ENCODE measurements at regions of chr17 and their contacts with region 1.

Region 1: DNA sequence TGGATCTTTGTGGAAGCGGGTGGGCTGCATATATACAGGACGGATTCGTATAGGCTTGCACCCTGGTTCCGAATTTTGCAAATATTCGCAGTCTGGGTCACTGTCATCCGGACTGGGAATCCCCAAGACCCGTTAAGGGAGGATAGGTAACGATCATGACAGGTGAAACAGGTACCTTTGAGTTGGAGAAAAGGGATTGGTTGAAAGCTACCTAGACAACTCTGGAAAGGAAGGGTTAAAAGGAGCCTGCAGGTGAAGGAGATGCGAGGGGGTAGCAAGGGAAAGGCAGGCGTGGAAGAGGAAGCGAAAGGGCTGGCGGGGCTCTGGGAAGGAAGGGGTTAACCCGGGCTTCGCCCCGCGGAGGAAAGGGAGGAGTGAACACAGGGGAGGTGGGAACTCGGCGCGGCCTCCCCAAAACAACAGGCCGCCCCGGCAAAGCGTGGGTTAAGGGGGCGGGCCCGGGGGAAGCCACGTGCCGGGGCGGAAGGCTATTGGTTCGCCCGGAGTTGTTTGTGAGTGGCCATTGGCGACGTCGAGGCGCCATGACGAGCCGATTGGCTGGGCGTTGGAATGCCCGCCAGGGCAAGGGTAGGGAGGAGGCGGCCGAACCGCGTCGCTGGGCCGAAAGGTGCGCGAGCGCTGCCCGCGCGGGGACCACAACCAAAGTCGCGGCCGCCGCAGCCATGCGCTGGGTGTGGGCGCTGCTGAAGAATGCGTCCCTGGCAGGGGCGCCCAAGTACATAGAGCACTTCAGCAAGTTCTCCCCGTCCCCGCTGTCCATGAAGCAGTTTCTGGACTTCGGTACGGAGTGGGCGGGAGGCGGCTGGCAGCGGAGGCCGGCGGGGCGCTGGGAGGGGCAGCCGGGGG is at the start of gene PDK2:
- DNase-seq: peak; percentile 85 to 95
- H3K4me3 ChIP-seq: peak within 1 kb of the TSS; percentile 76 to 92 (median 82)
- H3K27ac ChIP-seq: no peak within 1 kb of the TSS; the same call in 1 of the 2 replicates
- H3K4me1 ChIP-seq: peaks cover 0 to 7% (median 5%) of the 10 kb centered on the region in 4 experiments; a peak in 4 of 7 replicates
- H3K27me3 ChIP-seq: peaks cover 0 to 3% (median 0%) of the 10 kb centered on the region in 4 experiments; a peak in 3 of 7 replicates
- CTCF ChIP-seq: no peak
- EP300 ChIP-seq: no peak
- POLR2A ChIP-seq: no peak
- RAD21 ChIP-seq: no peak
- total RNA-seq, gene PDK2: 17.8 and 18.3 TPM in 2 replicates

Region 2: DNA sequence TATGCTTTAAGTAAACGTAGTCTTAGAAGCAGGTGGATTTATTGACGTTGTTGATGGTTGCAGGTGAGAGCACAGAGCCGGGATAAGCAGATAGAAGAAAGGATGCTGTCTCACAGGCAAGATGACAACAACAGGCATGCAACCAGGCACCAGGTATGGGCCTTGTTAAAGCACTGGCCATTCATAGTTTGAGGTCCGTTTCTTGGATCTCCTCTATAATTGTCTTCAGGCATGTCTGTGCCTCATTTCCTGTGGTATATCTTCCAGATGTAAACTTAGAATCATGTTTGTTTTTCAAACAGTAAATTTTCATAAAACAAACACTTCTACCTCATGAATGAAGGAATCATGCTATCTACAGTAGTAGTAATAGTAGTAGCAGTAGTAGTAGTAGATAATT is 285.9 kb before region 1 on chr17:
- CTCF ChIA-PET with region 1: no interaction called
- POLR2A ChIA-PET with region 1: no interaction called
- DNase-seq: no peak
- H3K4me3 ChIP-seq: no peak overlapping the region
- H3K27ac ChIP-seq: peak overlapping the region; percentile 0; the same call in 1 of the 2 replicates
- H3K4me1 ChIP-seq: peaks cover 1 to 16% (median 7%) of the 10 kb centered on the region in 4 experiments; a peak in 6 of 7 replicates
- H3K27me3 ChIP-seq: no peaks in the 10 kb centered on the region
- CTCF ChIP-seq: no peak
- EP300 ChIP-seq: no peak
- POLR2A ChIP-seq: no peak
- RAD21 ChIP-seq: no peak

Region 3: DNA sequence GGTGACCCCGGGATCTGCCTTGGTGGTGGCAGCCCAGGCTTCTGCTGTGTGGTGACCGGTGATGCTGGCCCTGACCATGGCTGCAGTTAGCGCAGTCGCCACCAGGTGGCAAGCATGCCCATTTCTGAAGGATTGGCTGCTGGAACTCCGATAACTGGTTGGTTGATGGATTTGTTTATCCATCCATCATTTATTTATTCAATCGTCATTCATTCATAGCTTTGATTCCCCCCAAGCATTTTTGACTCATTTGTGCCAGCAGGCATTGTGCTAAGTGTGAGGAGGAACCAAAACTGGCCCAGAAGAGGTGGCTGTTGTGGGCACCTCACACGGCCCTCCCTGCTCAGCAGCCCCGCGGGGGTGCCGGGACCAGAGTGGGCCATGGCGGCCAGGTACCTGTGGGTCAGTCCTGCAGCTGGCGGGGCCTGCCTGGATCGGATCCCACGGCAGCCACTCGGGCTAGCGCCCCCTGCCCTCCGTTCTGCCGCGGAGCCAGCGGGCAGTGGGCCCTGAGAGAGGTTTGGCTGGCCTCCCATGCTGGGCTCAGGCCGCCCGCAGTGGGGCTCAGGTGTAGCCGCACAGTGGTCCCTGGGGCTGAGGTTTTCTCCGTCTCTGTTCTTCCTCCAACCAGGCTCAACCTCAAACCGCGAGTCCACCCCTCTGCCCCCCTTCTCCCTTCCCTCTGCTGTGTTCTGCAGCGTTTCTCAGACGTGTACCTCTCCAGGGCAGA is 67.9 kb before region 1 on chr17:
- CTCF ChIA-PET with region 1: interaction called, 68 read pairs
- POLR2A ChIA-PET with region 1: interaction called, 4 read pairs
- DNase-seq: peak; percentile 44 to 98
- H3K4me3 ChIP-seq: peak overlapping the region in 1 of 4 experiments; percentile 35; a peak in 1 of 8 replicates
- H3K27ac ChIP-seq: no peak overlapping the region
- H3K4me1 ChIP-seq: peaks cover 0 to 20% (median 14%) of the 10 kb centered on the region in 4 experiments; a peak in 6 of 7 replicates
- H3K27me3 ChIP-seq: 0 out of 7 replicates have a peak, but pooled peaks cover 0 to 5% (median 0%) of the 10 kb centered on the region in 4 experiments
- CTCF ChIP-seq: peak; percentile 94 to 98 (median 96)
- EP300 ChIP-seq: no peak
- POLR2A ChIP-seq: no peak
- RAD21 ChIP-seq: peak; percentile 82 to 85

Region 4: DNA sequence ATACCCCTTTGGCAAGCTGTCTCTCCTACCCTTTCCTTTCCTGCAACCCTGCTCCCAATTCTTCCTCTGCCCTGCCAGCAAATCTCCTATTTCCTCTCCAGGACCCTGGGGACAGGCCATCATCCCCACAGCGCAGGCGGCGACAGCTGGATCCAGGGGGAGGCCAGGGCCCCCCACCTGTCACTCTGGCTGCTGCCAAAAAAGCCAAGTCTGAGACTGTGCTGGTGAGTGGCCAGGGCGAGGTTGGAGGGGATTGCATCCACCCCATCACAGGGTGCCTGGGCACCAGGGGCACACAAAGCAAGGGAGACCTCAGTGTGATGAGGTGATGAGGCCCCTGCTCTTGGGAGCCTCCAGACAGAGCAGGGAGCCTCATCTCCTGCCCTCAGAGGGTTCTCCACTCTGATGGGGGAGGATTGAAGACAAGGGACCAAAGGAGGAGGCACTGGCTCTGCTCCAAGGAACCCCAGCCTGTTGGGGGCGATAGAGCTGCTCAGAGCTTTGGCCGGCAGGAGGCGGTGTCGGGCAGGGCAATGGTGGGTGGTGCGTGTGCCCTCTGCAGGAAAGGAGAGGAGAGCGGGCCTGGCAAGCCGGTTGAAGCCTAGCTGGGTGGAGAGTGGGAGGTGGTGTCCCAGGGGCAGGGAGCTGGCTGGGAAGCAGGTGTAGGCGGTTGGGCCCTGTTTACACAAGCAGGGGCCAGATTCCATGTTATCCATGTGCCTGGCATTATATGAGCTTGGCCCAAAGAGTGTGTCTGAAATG is 15.5 kb before region 1 on chr17:
- CTCF ChIA-PET with region 1: interaction called, 46 read pairs
- POLR2A ChIA-PET with region 1: interaction called, 3 read pairs
- DNase-seq: peak in 1 of 2 experiments; percentile 91
- H3K4me3 ChIP-seq: no peak overlapping the region
- H3K27ac ChIP-seq: no peak overlapping the region
- H3K4me1 ChIP-seq: peaks cover 0 to 4% (median 3%) of the 10 kb centered on the region in 4 experiments; a peak in 3 of 7 replicates
- H3K27me3 ChIP-seq: no peaks in the 10 kb centered on the region; a peak in 2 of 7 replicates
- CTCF ChIP-seq: peak; percentile 100
- EP300 ChIP-seq: no peak
- POLR2A ChIP-seq: no peak
- RAD21 ChIP-seq: peak; percentile 54 to 73; a peak in 3 of 4 replicates

Region 5: GRCh38 chr17:50129728-50130558 is 35.0 kb after region 1 on chr17 and contains the start of gene SAMD14:
- CTCF ChIA-PET with region 1: interaction called, 412 read pairs
- POLR2A ChIA-PET with region 1: no interaction called
- DNase-seq: no peak
- H3K4me3 ChIP-seq: peak within 1 kb of the TSS; percentile 37 to 97 (median 74)
- H3K27ac ChIP-seq: no peak within 1 kb of the TSS
- H3K4me1 ChIP-seq: peaks cover 8 to 34% (median 30%) of the 10 kb centered on the region in 4 experiments
- H3K27me3 ChIP-seq: peaks cover 0 to 11% (median 2%) of the 10 kb centered on the region in 4 experiments; a peak in 4 of 7 replicates
- CTCF ChIP-seq: no peak
- EP300 ChIP-seq: no peak
- POLR2A ChIP-seq: no peak
- RAD21 ChIP-seq: no peak
- total RNA-seq, gene SAMD14: 5.8 and 5.9 TPM in 2 replicates

Region 6: GRCh38 chr17:50151041-50151936 is 56.3 kb after region 1 on chr17:
- CTCF ChIA-PET with region 1: interaction called, 15 read pairs
- POLR2A ChIA-PET with region 1: interaction called, 6 read pairs
- DNase-seq: peak; percentile 71 to 90
- H3K4me3 ChIP-seq: peak overlapping the region; percentile 57 to 65 (median 62)
- H3K27ac ChIP-seq: no peak overlapping the region
- H3K4me1 ChIP-seq: peaks cover 0 to 29% (median 17%) of the 10 kb centered on the region in 4 experiments; a peak in 6 of 7 replicates
- H3K27me3 ChIP-seq: peaks cover 2 to 17% (median 15%) of the 10 kb centered on the region in 4 experiments; a peak in 6 of 7 replicates
- CTCF ChIP-seq: peak; percentile 29 to 53 (median 32); a peak in 3 of 4 replicates
- EP300 ChIP-seq: 0 out of 3 replicates have a peak, but pooled peaks of 1 of the 2 experiments have one; percentile 17
- POLR2A ChIP-seq: no peak
- RAD21 ChIP-seq: peak in 1 of 2 experiments; percentile 6; a peak in 2 of 4 replicates

Region 7: DNA sequence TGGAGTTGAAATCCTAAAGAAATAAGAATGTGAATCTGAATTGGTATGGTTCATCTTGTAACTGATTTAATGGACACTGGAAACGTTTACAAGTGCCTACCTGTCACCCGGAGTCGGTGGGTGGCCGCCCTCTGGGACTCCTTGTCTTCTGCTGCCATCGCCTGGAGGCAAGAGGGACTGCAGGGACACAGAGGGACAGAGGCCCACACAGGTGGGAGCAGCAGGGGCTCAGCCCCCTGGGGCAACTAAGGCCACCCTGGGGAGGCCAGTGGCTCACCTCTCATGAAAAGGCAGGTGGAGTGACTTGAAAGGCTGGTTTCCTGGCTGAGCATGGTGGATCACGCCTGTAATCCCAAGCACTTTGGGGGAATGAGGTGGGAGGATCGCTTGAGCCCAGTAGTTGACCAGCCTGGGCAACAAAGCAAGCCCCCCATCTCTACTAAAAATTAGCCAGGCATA is 202.4 kb after region 1 on chr17:
- CTCF ChIA-PET with region 1: interaction called, 12 read pairs
- POLR2A ChIA-PET with region 1: no interaction called
- DNase-seq: peak; percentile 50 to 93
- H3K4me3 ChIP-seq: no peak overlapping the region
- H3K27ac ChIP-seq: no peak overlapping the region
- H3K4me1 ChIP-seq: peaks cover 0 to 4% (median under 1%) of the 10 kb centered on the region in 4 experiments; a peak in 2 of 7 replicates
- H3K27me3 ChIP-seq: no peaks in the 10 kb centered on the region
- CTCF ChIP-seq: peak; percentile 93 to 96 (median 94)
- EP300 ChIP-seq: no peak
- POLR2A ChIP-seq: no peak
- RAD21 ChIP-seq: peak; percentile 99 to 100

Region 8: DNA sequence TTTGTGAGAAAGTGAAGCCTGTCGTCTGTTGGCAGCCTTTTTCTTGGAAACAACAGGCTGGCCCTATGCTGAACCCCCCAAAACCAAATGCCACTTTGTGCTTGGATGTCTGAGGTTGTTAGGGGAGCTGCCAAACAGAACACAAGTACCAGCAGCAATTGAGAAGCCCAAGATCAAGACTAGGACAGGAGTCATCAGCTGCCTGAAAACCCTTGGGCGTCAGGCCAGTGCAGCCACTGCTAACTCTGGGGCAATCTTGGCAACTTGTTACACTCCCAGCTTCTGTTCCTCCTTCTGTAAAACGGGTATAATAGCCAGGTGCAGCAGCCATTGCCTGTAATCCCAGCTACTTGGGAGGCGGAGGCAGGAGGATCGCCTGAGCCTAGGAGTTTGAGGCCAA is 311.6 kb after region 1 on chr17:
- CTCF ChIA-PET with region 1: no interaction called
- POLR2A ChIA-PET with region 1: no interaction called
- DNase-seq: no peak
- H3K4me3 ChIP-seq: no peak overlapping the region
- H3K27ac ChIP-seq: no peak overlapping the region
- H3K4me1 ChIP-seq: peaks cover 0 to 5% (median 0%) of the 10 kb centered on the region in 4 experiments; a peak in 1 of 7 replicates
- H3K27me3 ChIP-seq: no peaks in the 10 kb centered on the region; a peak in 2 of 7 replicates
- CTCF ChIP-seq: no peak
- EP300 ChIP-seq: no peak
- POLR2A ChIP-seq: no peak
- RAD21 ChIP-seq: no peak

Measured in H1 (cell line).